ENCODE measurements at regions of chr21 and their contacts with region 1.

Region 1: DNA sequence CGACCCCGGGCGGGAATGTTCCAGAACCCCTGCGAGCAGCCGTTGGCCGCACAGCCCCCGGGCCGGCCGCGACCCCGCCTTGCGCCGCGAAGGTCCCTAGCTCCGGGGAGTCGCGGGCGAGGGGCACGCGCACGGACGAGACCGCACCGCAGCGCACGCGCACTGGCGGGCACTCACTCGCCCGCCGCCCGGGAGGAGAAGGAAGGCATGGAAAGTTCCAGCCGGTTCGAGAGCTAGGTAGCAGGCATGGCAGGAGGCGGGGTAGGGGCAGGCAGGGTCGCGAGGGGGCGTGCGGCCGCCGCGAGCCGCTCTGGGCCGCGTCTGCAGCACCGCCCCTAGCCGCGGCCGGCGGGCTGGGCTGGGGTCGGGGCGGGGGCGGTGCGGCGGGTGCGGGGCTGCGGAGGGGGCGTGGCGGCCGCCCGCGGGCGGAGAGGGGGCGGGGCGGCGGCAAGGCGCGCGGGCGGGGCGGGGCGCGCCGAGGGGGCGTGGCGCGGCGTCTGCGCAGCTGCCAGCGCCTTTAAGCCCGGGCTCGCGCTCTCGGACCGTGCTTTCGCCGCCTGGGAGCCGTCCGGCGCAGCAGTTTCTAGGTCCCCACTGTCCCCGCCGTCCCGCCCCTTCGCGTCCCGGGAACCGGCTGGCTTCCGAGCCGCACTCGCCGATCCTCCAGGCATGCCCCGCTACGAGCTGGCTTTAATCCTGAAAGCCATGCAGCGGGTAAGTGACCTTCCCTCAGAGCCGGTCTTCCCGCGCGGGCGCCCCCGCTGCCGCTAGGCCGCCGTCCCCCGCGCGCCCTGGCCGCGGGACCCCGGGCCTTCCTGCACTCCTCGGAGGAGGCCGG is at the starts of genes MRPS6 and SLC5A3:
- DNase-seq: peak; percentile 80
- ATAC-seq: peak; percentile 82
- H3K4me3 Mint-ChIP-seq: peak within 1 kb of the TSS; percentile 92
- H3K27ac Mint-ChIP-seq: peak within 1 kb of the TSS; percentile 84
- H3K4me1 Mint-ChIP-seq: peaks cover 42% of the 10 kb centered on the region
- H3K27me3 Mint-ChIP-seq: no peaks in the 10 kb centered on the region
- CTCF ChIP-seq: no peak
- total RNA-seq, gene MRPS6: 40.2 and 40.5 TPM in 2 replicates
- total RNA-seq, gene SLC5A3: 7.7 and 9.0 TPM in 2 replicates

Region 2: GRCh38 chr21:33915368-33916199 is 157.7 kb before region 1 on chr21 and contains the start of gene ATP5PO:
- CTCF ChIA-PET with region 1: no interaction called
- POLR2A ChIA-PET with region 1: no interaction called
- intact Hi-C with region 1: loop called (anchors 1 kb)
- DNase-seq: peak; percentile 91
- ATAC-seq: peak; percentile 100
- H3K4me3 Mint-ChIP-seq: peak within 1 kb of the TSS; percentile 99
- H3K27ac Mint-ChIP-seq: peak within 1 kb of the TSS; percentile 96
- H3K4me1 Mint-ChIP-seq: peaks cover 25% of the 10 kb centered on the region
- H3K27me3 Mint-ChIP-seq: no peaks in the 10 kb centered on the region
- CTCF ChIP-seq: no peak
- total RNA-seq, gene ATP5PO: 169 and 193 TPM in 2 replicates

Region 3: GRCh38 chr21:33947451-33948095 is 125.7 kb before region 1 on chr21:
- CTCF ChIA-PET with region 1: no interaction called
- POLR2A ChIA-PET with region 1: interaction called, 29 read pairs
- intact Hi-C with region 1: loop called (anchors 5 kb)
- DNase-seq: peak; percentile 36
- ATAC-seq: peak; percentile 74
- H3K4me3 Mint-ChIP-seq: peak overlapping the region; percentile 75
- H3K27ac Mint-ChIP-seq: peak overlapping the region; percentile 92
- H3K4me1 Mint-ChIP-seq: peaks cover 55% of the 10 kb centered on the region
- H3K27me3 Mint-ChIP-seq: no peaks in the 10 kb centered on the region
- CTCF ChIP-seq: no peak

Region 4: DNA sequence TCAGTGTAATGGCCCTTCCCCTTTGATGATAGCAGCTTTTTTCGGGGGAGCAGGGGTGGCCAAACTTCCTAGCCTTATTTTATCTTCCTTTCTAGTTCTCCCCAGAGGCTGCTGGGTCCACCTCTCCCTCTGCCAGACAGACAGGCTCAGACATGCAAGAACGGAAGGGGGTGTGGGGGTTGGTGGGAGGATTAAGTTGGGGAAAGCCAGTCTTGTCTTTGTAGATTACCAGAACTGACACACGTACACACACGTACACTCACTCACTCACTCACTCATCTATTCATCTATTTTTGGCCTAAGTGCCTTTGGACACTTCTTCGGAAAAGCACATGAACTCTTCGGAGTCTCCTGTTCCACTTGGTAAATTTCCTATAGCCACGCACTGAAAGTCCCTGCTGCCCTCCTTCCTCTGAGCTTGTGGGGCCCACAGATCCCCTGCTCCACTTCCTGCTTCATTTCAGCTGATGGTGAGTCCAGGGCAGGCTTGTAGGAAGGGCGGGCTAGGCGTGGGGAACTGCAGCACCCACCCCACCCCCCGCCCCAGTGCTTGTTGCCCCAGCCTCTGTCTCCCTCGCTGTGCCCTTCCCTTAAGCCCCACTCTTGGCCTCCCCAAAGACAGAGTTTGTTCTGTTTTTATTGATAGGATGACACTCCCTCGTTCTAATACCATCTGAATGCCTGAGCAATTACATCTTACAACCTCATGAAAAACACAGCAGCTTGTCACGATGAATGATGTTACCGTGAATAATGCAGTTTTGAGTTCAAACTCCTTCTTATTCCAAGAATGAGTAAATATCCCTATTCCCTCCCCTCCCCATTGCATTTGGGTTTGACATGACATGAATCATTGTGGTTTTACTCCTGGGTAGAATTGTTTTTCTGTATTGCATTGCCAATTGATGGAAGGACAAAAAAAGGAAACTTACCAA is 96.9 kb before region 1 on chr21:
- CTCF ChIA-PET with region 1: interaction called, 3 read pairs
- POLR2A ChIA-PET with region 1: no interaction called
- intact Hi-C with region 1: loop called (anchors 1 kb)
- DNase-seq: no peak
- ATAC-seq: peak; percentile 49
- H3K4me3 Mint-ChIP-seq: peak overlapping the region; percentile 66
- H3K27ac Mint-ChIP-seq: peak overlapping the region; percentile 90
- H3K4me1 Mint-ChIP-seq: peaks cover 36% of the 10 kb centered on the region
- H3K27me3 Mint-ChIP-seq: no peaks in the 10 kb centered on the region
- CTCF ChIP-seq: no peak

Region 5: GRCh38 chr21:34020005-34020847 is 53.0 kb before region 1 on chr21:
- CTCF ChIA-PET with region 1: interaction called, 3 read pairs
- POLR2A ChIA-PET with region 1: interaction called, 23 read pairs
- intact Hi-C with region 1: loop called (anchors 1 kb)
- DNase-seq: peak; percentile 45
- ATAC-seq: peak; percentile 69
- H3K4me3 Mint-ChIP-seq: peak overlapping the region; percentile 75
- H3K27ac Mint-ChIP-seq: peak overlapping the region; percentile 96
- H3K4me1 Mint-ChIP-seq: no peaks in the 10 kb centered on the region
- H3K27me3 Mint-ChIP-seq: no peaks in the 10 kb centered on the region
- CTCF ChIP-seq: no peak

Region 6: DNA sequence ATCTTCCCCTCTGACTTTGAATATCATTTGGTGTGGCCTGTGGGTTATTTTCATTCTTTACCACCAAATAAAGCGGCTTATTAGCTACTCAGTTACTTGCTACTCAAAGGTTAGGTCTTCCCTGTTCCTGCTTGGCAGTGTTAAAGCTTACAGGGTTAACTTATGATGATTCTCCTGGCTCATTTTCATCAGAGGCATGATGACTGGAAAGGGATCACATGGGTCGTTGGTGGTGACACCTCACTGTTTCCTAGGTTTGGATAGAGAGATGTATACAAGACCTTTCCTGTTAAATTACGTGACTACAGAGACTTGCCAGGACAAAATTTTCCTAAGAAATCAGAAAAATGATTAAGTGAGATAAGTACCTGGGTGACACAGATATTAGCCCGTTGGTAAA is 27.5 kb after region 1 on chr21:
- CTCF ChIA-PET with region 1: no interaction called
- POLR2A ChIA-PET with region 1: no interaction called
- intact Hi-C with region 1: no loop called
- DNase-seq: no peak
- ATAC-seq: no peak
- H3K4me3 Mint-ChIP-seq: no peak overlapping the region
- H3K27ac Mint-ChIP-seq: no peak overlapping the region
- H3K4me1 Mint-ChIP-seq: peaks cover 41% of the 10 kb centered on the region
- H3K27me3 Mint-ChIP-seq: no peaks in the 10 kb centered on the region
- CTCF ChIP-seq: no peak

Region 7: GRCh38 chr21:34202553-34203372 is 129.5 kb after region 1 on chr21:
- CTCF ChIA-PET with region 1: no interaction called
- POLR2A ChIA-PET with region 1: no interaction called
- intact Hi-C with region 1: loop called (anchors 10 kb)
- DNase-seq: no peak
- ATAC-seq: no peak
- H3K4me3 Mint-ChIP-seq: peak overlapping the region; percentile 67
- H3K27ac Mint-ChIP-seq: no peak overlapping the region
- H3K4me1 Mint-ChIP-seq: peaks cover 22% of the 10 kb centered on the region
- H3K27me3 Mint-ChIP-seq: peaks cover 12% of the 10 kb centered on the region
- CTCF ChIP-seq: no peak

Region 8: GRCh38 chr21:36060159-36060921 is 1987.1 kb after region 1 on chr21 and contains the start of gene SETD4:
- CTCF ChIA-PET with region 1: no interaction called
- POLR2A ChIA-PET with region 1: no interaction called
- intact Hi-C with region 1: loop called (anchors 10 kb)
- DNase-seq: peak; percentile 96
- ATAC-seq: peak; percentile 89
- H3K4me3 Mint-ChIP-seq: peak within 1 kb of the TSS; percentile 95
- H3K27ac Mint-ChIP-seq: peak within 1 kb of the TSS; percentile 96
- H3K4me1 Mint-ChIP-seq: peaks cover 20% of the 10 kb centered on the region
- H3K27me3 Mint-ChIP-seq: no peaks in the 10 kb centered on the region
- CTCF ChIP-seq: no peak
- total RNA-seq, gene SETD4: 31.6 and 40.4 TPM in 2 replicates

Measured in activated B cell treated with CpG ODN at 0.5 μM for 24 hours (primary cell).